ENCODE measurements at regions of chr2 and their contacts with region 1.

Region 1: DNA sequence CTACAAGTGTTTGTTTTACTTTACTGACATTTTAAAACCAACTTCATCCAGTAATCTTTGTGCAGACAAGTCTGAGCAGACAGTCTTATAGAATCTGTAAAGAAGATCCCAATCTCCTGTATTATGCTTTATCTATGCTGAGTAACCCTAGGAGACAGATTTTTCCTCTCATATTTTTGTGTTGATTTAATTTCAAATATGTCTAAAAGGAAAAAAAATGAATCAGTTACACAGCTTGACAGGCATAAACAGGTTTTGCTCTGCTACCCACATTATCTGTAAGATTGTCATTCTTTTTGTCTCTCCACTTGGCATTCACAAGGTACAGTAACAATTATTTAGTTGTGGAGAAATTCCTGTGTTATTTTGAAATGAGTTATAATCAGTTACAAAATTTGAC is 415.0 kb downstream of the NYAP2 start:
- DNase-seq: no peak
- ATAC-seq: no peak
- H3K4me3 ChIP-seq: no peak overlapping the region
- H3K27ac ChIP-seq: no peak overlapping the region
- H3K4me1 ChIP-seq: no peaks in the 10 kb centered on the region
- H3K27me3 ChIP-seq: no peaks in the 10 kb centered on the region
- CTCF ChIP-seq: no peak

Region 2: GRCh38 chr2:225104321-225104720 is 710.2 kb before region 1 on chr2:
- CTCF ChIA-PET with region 1: no interaction called
- POLR2A ChIA-PET with region 1: interaction called, 11 read pairs
- in situ Hi-C with region 1: no loop called
- intact Hi-C with region 1: no loop called
- DNase-seq: no peak
- ATAC-seq: no peak
- H3K4me3 ChIP-seq: no peak overlapping the region
- H3K27ac ChIP-seq: no peak overlapping the region
- H3K4me1 ChIP-seq: peaks cover 6% of the 10 kb centered on the region
- H3K27me3 ChIP-seq: no peaks in the 10 kb centered on the region
- CTCF ChIP-seq: no peak

Region 3: GRCh38 chr2:225865468-225865867 is 50.9 kb after region 1 on chr2:
- CTCF ChIA-PET with region 1: no interaction called
- POLR2A ChIA-PET with region 1: no interaction called
- in situ Hi-C with region 1: no loop called
- intact Hi-C with region 1: no loop called
- DNase-seq: no peak
- ATAC-seq: no peak
- H3K4me3 ChIP-seq: no peak overlapping the region
- H3K27ac ChIP-seq: no peak overlapping the region
- H3K4me1 ChIP-seq: no peaks in the 10 kb centered on the region
- H3K27me3 ChIP-seq: no peaks in the 10 kb centered on the region
- CTCF ChIP-seq: no peak

Measured in Panc1 (cell line).